ENCODE measurements at regions of chr10 and their contacts with region 1.

Region 1: GRCh38 chr10:88944813-88945212 is 7.8 kb downstream of the ACTA2 start:
- DNase-seq: peak; percentile 9
- CTCF ChIP-seq: no peak

Region 2: DNA sequence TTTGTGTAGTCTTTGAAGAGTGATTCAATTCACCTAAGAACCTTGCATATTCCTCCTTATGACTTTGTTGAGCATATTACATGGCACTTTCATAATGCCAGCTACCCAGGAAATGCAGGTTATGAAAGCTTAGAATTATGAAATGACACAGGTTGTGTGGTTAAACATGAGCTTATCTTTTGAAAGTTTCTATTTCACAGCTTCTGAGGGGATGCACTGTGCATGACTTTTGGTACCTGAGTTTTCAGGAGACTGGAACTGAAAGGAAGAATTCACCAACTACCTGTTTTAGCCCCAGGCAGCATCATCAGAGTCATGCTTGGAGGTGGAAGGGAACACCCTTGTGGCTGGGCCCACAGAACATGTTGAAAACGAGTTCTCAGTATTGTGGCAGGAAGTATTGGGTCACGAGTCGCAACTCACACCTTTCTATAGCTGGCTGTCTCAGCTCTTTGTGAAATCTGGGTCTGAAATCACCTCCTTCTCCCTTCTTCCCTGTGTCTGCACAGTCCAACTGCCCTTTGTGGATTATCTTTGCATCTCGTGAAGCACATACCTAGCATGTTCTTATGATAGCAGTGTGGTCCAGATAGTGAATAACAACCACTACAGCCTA is 853.2 kb before region 1 on chr10:
- in situ Hi-C with region 1: no loop called
- DNase-seq: peak; percentile 71
- CTCF ChIP-seq: no peak

Region 3: GRCh38 chr10:88983206-88983605 is 38.4 kb after region 1 on chr10:
- in situ Hi-C with region 1: loop called (anchors 5 kb)
- DNase-seq: no peak
- CTCF ChIP-seq: no peak

Region 4: GRCh38 chr10:89019569-89020327 is 74.9 kb after region 1 on chr10:
- in situ Hi-C with region 1: loop called (anchors 10 kb)
- DNase-seq: no peak
- CTCF ChIP-seq: no peak

Measured in GM13977 (cell line).